PC-9 (cell line): ENCODE measurements at regions of chr1 and their contacts with region 1.

Region 1: GRCh38 chr1:37989361-37989930 is 376 bp downstream of the SF3A3 start:
- DNase-seq: peak in 1 of 2 experiments; percentile 56
- H3K4me3 ChIP-seq: peak overlapping the region; percentile 89
- H3K27ac ChIP-seq: no peak overlapping the region
- H3K4me1 ChIP-seq: peaks cover 10% of the 10 kb centered on the region
- H3K27me3 ChIP-seq: no peaks in the 10 kb centered on the region
- CTCF ChIP-seq: no peak

Region 2: DNA sequence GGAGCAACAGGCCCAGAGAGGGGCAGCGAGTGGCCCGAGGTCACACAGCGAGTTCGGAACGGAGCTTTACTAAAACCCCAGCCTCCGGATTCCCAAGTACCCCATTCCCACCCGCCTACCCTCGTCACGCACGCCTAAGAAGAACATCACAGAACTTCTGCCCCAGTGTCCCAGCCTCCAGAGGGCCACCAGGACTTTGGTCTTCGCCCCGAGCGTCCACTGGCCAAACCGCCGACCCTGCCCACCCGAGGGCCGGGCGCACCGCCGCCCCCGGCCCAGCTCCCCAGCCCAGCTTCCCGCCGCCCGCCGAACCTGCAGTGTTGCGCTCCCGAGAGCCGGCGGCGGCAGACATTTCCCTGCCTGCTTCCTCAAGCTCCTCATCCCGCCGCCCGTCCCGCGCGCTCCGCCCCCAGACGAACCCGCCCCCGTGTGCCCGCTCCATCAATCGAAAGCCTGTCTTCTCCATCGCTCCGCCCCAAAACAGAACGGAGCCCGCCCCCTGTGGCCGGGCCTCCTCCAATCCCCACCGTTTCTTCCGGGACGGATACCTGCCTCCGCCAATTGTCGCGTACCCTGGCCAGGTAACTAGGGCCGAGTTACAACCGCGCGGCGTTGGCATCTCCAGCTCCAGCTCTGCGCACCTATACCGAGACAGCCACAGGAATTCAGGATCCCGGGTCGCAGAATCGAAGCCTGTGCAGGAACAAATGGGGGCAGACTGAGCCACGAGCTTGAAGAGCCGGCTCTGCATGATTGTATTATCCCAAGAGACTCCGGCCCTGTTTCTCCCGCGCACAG is 57.9 kb before region 1 on chr1:
- CTCF ChIA-PET with region 1: interaction called, 14 read pairs
- POLR2A ChIA-PET with region 1: interaction called, 3 read pairs
- intact Hi-C with region 1: no loop called
- DNase-seq: peak; percentile 96 to 100
- H3K4me3 ChIP-seq: peak overlapping the region; percentile 78
- H3K27ac ChIP-seq: peak overlapping the region; percentile 28; the same call in 1 of the 2 replicates
- H3K4me1 ChIP-seq: peaks cover 38% of the 10 kb centered on the region
- H3K27me3 ChIP-seq: no peaks in the 10 kb centered on the region
- CTCF ChIP-seq: no peak

Region 3: DNA sequence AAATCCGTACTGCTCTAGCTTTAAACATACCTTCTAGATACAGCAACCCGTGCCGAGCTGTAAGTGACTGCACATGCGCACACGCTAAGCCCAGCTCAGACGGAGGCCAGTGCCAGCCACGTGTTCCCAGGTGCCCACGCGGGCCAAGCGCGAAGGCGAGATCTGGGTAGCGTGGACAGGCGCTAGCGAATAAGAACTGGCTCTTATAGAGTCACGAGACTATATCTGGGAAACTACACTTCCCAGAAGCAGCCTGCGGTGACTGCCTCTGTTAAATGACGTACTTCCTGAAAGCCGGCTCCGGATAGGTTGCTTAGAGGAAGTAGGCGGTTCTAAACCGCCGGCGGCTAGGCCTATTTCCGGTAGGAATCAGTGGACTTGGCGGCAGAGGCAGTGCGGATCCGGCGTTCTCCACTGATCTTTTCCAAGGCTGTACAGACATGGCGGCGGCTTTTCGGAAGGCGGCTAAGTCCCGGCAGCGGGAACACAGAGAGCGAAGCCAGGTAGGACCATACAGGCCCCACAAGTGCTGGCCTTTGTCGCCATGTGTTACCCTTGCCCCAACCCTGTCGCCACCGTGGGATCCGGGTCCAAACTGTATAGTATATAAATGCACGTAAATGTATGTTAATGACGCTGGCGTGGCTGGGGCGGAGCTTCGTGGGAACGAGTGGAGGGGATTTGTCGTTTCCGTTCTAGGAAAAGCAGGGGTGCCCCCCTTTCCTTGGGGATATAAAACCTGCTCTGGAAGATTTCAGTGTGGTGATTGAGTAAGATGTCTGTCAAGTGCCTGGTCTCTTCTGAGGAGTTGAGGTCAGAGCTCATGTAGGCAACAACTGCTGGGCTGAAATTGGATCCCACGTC is 23.1 kb after region 1 on chr1 and contains the start of gene UTP11:
- CTCF ChIA-PET with region 1: interaction called, 5 read pairs
- POLR2A ChIA-PET with region 1: no interaction called
- intact Hi-C with region 1: loop called (anchors 1 kb)
- DNase-seq: peak; percentile 95 to 98
- H3K4me3 ChIP-seq: peak within 1 kb of the TSS; percentile 69
- H3K27ac ChIP-seq: peak within 1 kb of the TSS; percentile 73
- H3K4me1 ChIP-seq: peaks cover 15% of the 10 kb centered on the region
- H3K27me3 ChIP-seq: no peaks in the 10 kb centered on the region
- CTCF ChIP-seq: no peak
- total RNA-seq, gene UTP11: 21.8 and 36.4 TPM in 2 replicates

Region 4: GRCh38 chr1:38834937-38835827 is 845.7 kb after region 1 on chr1:
- CTCF ChIA-PET with region 1: no interaction called
- POLR2A ChIA-PET with region 1: no interaction called
- intact Hi-C with region 1: loop called (anchors 1 kb)
- DNase-seq: peak; percentile 51 to 73
- H3K4me3 ChIP-seq: no peak overlapping the region
- H3K27ac ChIP-seq: no peak overlapping the region
- H3K4me1 ChIP-seq: no peaks in the 10 kb centered on the region
- H3K27me3 ChIP-seq: peaks cover 24% of the 10 kb centered on the region
- CTCF ChIP-seq: peak; percentile 89